H1 (cell line): ENCODE measurements at regions of chr5 and their contacts with region 1.

Region 1: DNA sequence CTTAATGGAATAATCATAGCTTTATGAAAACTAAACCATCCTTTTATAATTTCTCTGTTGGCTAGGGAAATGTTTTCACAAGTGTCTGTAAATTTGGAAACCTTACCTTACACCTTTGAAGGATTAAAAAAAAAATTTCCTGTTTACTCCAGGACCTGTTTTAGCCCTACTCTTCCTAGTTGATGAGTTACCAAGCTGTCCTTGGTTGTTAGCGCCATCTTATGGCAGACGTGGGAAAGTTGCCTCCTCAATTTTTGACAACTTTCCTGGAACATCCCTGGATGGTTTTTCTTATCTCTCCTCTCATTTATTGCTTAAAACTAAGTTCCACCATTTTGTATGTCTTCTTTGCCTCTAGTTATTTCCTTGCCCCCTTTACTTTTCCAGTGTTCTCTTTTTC is 25.7 kb downstream of the ZSWIM6 start:
- DNase-seq: peak in 1 of 2 experiments; percentile 59
- H3K4me3 ChIP-seq: no peak overlapping the region
- H3K27ac ChIP-seq: no peak overlapping the region
- H3K4me1 ChIP-seq: peaks cover 0 to 4% (median 0%) of the 10 kb centered on the region in 4 experiments; a peak in 2 of 7 replicates
- H3K27me3 ChIP-seq: no peaks in the 10 kb centered on the region
- CTCF ChIP-seq: peak in 2 of 3 experiments; percentile 68 to 82; a peak in 3 of 4 replicates
- EP300 ChIP-seq: no peak
- POLR2A ChIP-seq: no peak
- RAD21 ChIP-seq: peak; percentile 85 to 89

Region 2: GRCh38 chr5:61010467-61011454 is 347.0 kb before region 1 on chr5:
- CTCF ChIA-PET with region 1: interaction called, 20 read pairs
- POLR2A ChIA-PET with region 1: no interaction called
- DNase-seq: peak in 1 of 2 experiments; percentile 13
- H3K4me3 ChIP-seq: no peak overlapping the region
- H3K27ac ChIP-seq: no peak overlapping the region
- H3K4me1 ChIP-seq: no peaks in the 10 kb centered on the region
- H3K27me3 ChIP-seq: no peaks in the 10 kb centered on the region
- CTCF ChIP-seq: peak; percentile 58 to 98 (median 89)
- EP300 ChIP-seq: no peak
- POLR2A ChIP-seq: no peak
- RAD21 ChIP-seq: peak; percentile 76 to 80

Region 3: DNA sequence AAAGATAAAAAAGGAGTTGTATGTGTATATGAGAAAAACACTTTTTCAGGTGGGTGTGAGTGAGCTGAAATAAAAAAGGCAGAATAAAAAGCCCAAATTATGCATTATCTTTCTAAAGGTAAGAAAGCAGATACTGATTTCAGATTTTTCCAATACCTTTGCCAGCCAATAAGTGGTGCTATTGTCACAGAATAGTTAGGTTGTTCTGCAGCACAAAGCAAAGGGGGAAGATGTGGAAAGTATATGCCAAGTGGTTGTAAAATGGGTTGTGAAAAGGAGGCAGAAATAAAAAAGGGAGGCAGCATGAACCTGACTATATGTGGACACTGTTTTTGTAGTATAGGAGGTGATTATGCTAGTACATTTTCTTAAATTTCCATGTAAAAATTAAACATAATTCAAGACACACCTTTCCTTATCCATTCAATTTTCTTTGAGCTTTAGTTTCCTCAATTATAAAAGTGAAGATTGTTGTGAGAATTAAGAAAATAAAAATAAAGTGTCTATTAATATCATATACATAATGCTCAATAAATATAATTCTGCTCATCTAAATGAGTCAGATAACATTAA is 302.2 kb before region 1 on chr5:
- CTCF ChIA-PET with region 1: interaction called, 16 read pairs
- POLR2A ChIA-PET with region 1: no interaction called
- DNase-seq: no peak
- H3K4me3 ChIP-seq: no peak overlapping the region
- H3K27ac ChIP-seq: no peak overlapping the region
- H3K4me1 ChIP-seq: peaks cover 0 to 2% (median 1%) of the 10 kb centered on the region in 4 experiments; a peak in 2 of 7 replicates
- H3K27me3 ChIP-seq: peaks cover 0 to 1% (median 0%) of the 10 kb centered on the region in 4 experiments; a peak in 1 of 7 replicates
- CTCF ChIP-seq: peak in 2 of 3 experiments; percentile 64 to 78; a peak in 3 of 4 replicates
- EP300 ChIP-seq: no peak
- POLR2A ChIP-seq: no peak
- RAD21 ChIP-seq: peak; percentile 89 to 90

Region 4: GRCh38 chr5:61347080-61347479 is 10.7 kb before region 1 on chr5:
- CTCF ChIA-PET with region 1: interaction called, 30 read pairs
- POLR2A ChIA-PET with region 1: interaction called, 4 read pairs
- DNase-seq: no peak
- H3K4me3 ChIP-seq: no peak overlapping the region
- H3K27ac ChIP-seq: no peak overlapping the region
- H3K4me1 ChIP-seq: no peaks in the 10 kb centered on the region
- H3K27me3 ChIP-seq: no peaks in the 10 kb centered on the region
- CTCF ChIP-seq: peak in 1 of 3 experiments; percentile 12; a peak in 1 of 4 replicates
- EP300 ChIP-seq: no peak
- POLR2A ChIP-seq: no peak
- RAD21 ChIP-seq: no peak

Region 5: GRCh38 chr5:61416420-61416819 is 58.7 kb after region 1 on chr5:
- CTCF ChIA-PET with region 1: no interaction called
- POLR2A ChIA-PET with region 1: no interaction called
- DNase-seq: peak in 1 of 2 experiments; percentile 27
- H3K4me3 ChIP-seq: peak overlapping the region in 1 of 4 experiments; percentile 19; a peak in 1 of 8 replicates
- H3K27ac ChIP-seq: no peak overlapping the region
- H3K4me1 ChIP-seq: peaks cover 9 to 34% (median 18%) of the 10 kb centered on the region in 4 experiments
- H3K27me3 ChIP-seq: no peaks in the 10 kb centered on the region
- CTCF ChIP-seq: peak in 1 of 3 experiments; percentile 6; a peak in 2 of 4 replicates
- EP300 ChIP-seq: no peak
- POLR2A ChIP-seq: no peak
- RAD21 ChIP-seq: peak; percentile 30 to 35; a peak in 3 of 4 replicates

Region 6: GRCh38 chr5:61534481-61535267 is 176.9 kb after region 1 on chr5:
- CTCF ChIA-PET with region 1: no interaction called
- POLR2A ChIA-PET with region 1: no interaction called
- DNase-seq: no peak
- H3K4me3 ChIP-seq: no peak overlapping the region
- H3K27ac ChIP-seq: no peak overlapping the region
- H3K4me1 ChIP-seq: no peaks in the 10 kb centered on the region
- H3K27me3 ChIP-seq: no peaks in the 10 kb centered on the region
- CTCF ChIP-seq: no peak
- EP300 ChIP-seq: no peak
- POLR2A ChIP-seq: no peak
- RAD21 ChIP-seq: no peak